ENCODE measurements at regions of chr15 and their contacts with region 1.

Region 1: DNA sequence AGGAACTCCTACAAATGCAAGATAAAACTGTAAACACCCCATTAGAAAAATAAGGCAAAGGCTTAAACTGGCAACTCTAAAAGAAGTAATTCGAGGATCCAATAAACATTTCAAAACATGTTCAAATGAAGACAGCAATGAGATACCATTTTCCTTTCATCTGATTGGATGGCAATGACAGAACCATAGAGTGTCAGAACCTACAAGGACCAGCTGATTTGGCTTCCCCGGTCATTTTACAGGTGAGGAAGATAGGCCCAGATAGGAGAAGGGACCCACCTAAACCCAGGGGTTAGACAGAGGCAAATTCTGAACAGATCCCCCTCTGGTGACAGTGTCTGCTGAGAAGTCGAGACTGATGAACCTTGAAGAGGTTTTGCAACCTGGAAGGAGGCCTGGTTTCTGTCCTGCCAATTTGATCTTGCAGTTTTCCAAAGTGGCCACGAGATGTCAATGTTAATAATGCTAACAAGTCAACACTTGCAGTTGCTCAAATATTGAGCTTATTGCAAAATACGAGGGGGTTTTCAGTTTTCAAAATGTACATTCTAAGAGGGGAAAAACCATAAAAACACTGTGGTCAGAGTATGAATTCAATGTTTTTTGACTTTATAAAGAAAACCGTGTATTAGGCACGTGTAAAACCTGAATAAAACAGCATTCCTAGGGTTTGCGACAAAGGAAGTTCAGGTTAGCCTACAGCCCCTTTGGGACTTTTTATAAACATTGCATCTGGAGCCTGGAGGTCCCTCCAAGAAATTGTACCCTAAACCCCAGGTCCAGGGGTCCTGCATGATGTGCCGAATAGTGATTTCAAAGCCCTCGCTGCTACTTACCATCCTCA is 21.5 kb downstream of the CFAP161 start:
- DNase-seq: peak in 1 of 2 donors; percentile 45
- ATAC-seq: peak in 7 of 8 donors; percentile 31 to 60 (median 43)
- H3K4me3 ChIP-seq: no peak overlapping the region
- H3K27ac ChIP-seq: no peak overlapping the region
- H3K4me1 ChIP-seq: peaks cover 4 to 33% (median 10%) of the 10 kb centered on the region in 9 donors
- H3K27me3 ChIP-seq: peaks cover 0 to 4% (median 0%) of the 10 kb centered on the region in 7 donors
- CTCF ChIP-seq: peak; percentile 26 to 81 (median 65)

Region 2: GRCh38 chr15:81106560-81106959 is 49.0 kb before region 1 on chr15:
- intact Hi-C with region 1: loop called in 4 of 10 experiments (anchors 5 to 10 kb)
- DNase-seq: peak in 1 of 2 donors; percentile 47
- ATAC-seq: peak; percentile 57 to 87 (median 70)
- H3K4me3 ChIP-seq: no peak overlapping the region
- H3K27ac ChIP-seq: no peak overlapping the region
- H3K4me1 ChIP-seq: peaks cover 0 to 21% (median 2%) of the 10 kb centered on the region in 9 donors
- H3K27me3 ChIP-seq: no peaks in the 10 kb centered on the region
- CTCF ChIP-seq: peak; percentile 51 to 88 (median 78)

Region 3: DNA sequence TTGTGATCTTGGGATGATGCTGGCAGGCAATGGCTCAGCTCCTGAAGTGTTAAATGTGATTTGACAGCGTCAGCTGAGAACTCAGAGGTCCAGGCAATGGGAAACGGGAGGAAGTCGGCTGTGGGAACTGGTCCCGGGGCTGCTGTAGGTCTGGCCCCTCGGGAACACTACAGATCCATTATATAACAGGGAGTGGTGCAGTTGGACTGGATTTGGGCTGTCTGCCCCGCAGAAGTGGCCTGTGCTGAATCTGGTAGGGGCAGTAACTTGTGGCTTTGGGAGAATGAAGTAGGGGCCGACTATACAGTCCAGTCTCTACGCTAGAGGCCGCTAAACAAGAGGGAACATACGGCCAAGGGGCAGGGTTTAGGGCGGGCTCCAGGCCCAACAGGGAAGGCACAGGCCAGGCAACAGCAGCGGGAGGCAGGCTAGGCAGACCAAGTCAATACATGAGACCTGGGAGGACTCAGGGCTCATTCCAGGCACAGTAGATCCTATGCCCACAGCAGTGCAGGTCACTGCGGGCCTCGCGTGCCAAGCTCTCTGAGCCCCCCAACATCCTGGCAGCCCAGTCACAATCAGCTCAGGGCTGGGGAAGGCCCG is 20.8 kb after region 1 on chr15:
- intact Hi-C with region 1: loop called in 1 of 10 experiments (anchors 2 kb)
- DNase-seq: peak; percentile 66 to 86
- ATAC-seq: peak; percentile 83 to 93 (median 89)
- H3K4me3 ChIP-seq: no peak overlapping the region
- H3K27ac ChIP-seq: peak overlapping the region; percentile 24 to 87 (median 82)
- H3K4me1 ChIP-seq: peaks cover 2 to 45% (median 10%) of the 10 kb centered on the region in 9 donors
- H3K27me3 ChIP-seq: peaks cover 0 to 7% (median 3%) of the 10 kb centered on the region in 7 donors
- CTCF ChIP-seq: peak in 7 of 9 donors; percentile 6 to 55 (median 26)

Region 4: DNA sequence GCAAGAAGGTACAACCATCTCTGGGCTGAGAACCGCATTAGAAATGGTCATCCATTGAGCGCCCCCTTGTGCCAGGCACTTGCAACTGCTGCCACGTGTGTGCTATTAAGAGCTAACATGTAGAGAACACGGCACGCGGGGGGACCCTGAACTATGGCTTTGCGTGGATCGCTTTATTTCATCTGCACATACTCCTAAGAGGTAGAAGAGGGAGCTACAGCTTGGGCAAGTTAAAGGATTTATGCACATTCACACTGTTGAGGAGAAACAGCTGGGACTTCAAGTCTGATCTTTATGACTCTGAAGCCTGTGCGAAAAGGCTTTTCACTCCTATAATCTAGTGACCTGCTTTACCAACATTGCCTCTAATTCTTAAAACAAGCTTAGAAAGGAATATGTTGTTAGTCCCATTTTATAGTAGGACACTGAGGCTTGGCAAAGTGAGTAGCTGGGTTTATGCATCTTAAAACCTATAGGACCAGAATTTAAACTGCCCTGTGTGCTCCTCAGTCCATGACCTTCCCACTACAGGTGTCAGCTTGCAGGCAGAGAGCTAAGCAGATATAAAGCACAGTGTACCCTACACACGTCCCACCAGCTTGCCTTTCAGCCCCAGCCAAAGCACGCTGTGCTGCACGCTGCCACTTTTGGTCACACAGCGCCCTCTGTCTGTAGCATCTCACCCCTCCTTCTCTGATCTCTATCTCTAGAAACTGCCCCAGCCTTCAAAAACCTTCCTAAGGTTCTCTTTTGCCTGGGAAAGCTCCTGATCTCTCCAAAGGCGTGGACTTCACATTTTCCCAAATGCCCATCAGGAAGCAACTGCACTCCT is 110.6 kb after region 1 on chr15:
- intact Hi-C with region 1: loop called (anchors 2 to 5 kb)
- DNase-seq: peak; percentile 80 to 81
- ATAC-seq: peak; percentile 87 to 96 (median 94)
- H3K4me3 ChIP-seq: peak overlapping the region in 2 of 10 donors; percentile 27 to 29
- H3K27ac ChIP-seq: no peak overlapping the region
- H3K4me1 ChIP-seq: peaks cover 0 to 30% (median 15%) of the 10 kb centered on the region in 9 donors
- H3K27me3 ChIP-seq: peaks cover 0 to 6% (median 0%) of the 10 kb centered on the region in 7 donors
- CTCF ChIP-seq: peak; percentile 81 to 93 (median 86)

Region 5: GRCh38 chr15:81323944-81324881 is 168.6 kb after region 1 on chr15 and contains the start of gene STARD5:
- intact Hi-C with region 1: no loop called
- DNase-seq: peak; percentile 99
- ATAC-seq: peak; percentile 100
- H3K4me3 ChIP-seq: peak within 1 kb of the TSS; percentile 45 to 87 (median 76)
- H3K27ac ChIP-seq: peak within 1 kb of the TSS in 9 of 10 donors; percentile 10 to 87 (median 64)
- H3K4me1 ChIP-seq: peaks cover 3 to 38% (median 14%) of the 10 kb centered on the region in 9 donors
- H3K27me3 ChIP-seq: no peaks in the 10 kb centered on the region
- CTCF ChIP-seq: no peak
- total RNA-seq, gene STARD5: 0.70 to 3.5 (median 1.2) TPM

Measured in heart right ventricle (tissue), 16 donors.